Naive thymus-derived CD4-positive, alpha-beta T cell (primary cell): ENCODE measurements at regions of chr12 and their contacts with region 1.

Region 1: GRCh38 chr12:46268590-46269558 is at the start of gene SLC38A1:
- DNase-seq: peak; percentile 73 to 92 (median 88)
- ATAC-seq: peak; percentile 81
- H3K4me3 ChIP-seq: peak within 1 kb of the TSS; percentile 93
- H3K4me3 Mint-ChIP-seq: no peak within 1 kb of the TSS
- H3K27ac ChIP-seq: peak within 1 kb of the TSS; percentile 98
- H3K27ac Mint-ChIP-seq: no peak within 1 kb of the TSS
- H3K4me1 ChIP-seq: peaks cover 35 to 40% of the 10 kb centered on the region in 2 donors
- H3K4me1 Mint-ChIP-seq: peaks cover 9 to 35% (median 31%) of the 10 kb centered on the region in 7 donors
- H3K27me3 ChIP-seq: no peaks in the 10 kb centered on the region
- H3K27me3 Mint-ChIP-seq: no peaks in the 10 kb centered on the region
- total RNA-seq, gene SLC38A1: 172 to 283 (median 249) TPM

Region 2: GRCh38 chr12:46198913-46199312 is 70.0 kb before region 1 on chr12:
- CTCF ChIA-PET with region 1: interaction called, 3 read pairs
- POLR2A ChIA-PET with region 1: interaction called, 78 read pairs
- intact Hi-C with region 1: no loop called
- DNase-seq: no peak
- ATAC-seq: no peak
- H3K4me3 ChIP-seq: no peak overlapping the region
- H3K4me3 Mint-ChIP-seq: peak overlapping the region in 1 of 10 donors; percentile 27
- H3K27ac ChIP-seq: no peak overlapping the region
- H3K27ac Mint-ChIP-seq: peak overlapping the region in 8 of 9 donors; percentile 3 to 90 (median 71)
- H3K4me1 ChIP-seq: no peaks in the 10 kb centered on the region
- H3K4me1 Mint-ChIP-seq: peaks cover 4 to 42% (median 40%) of the 10 kb centered on the region in 7 donors
- H3K27me3 ChIP-seq: no peaks in the 10 kb centered on the region
- H3K27me3 Mint-ChIP-seq: no peaks in the 10 kb centered on the region

Region 3: GRCh38 chr12:46224386-46224785 is 44.5 kb before region 1 on chr12:
- CTCF ChIA-PET with region 1: no interaction called
- POLR2A ChIA-PET with region 1: interaction called, 303 read pairs
- intact Hi-C with region 1: no loop called
- DNase-seq: no peak
- ATAC-seq: no peak
- H3K4me3 ChIP-seq: no peak overlapping the region
- H3K4me3 Mint-ChIP-seq: peak overlapping the region in 5 of 10 donors; percentile 12 to 58 (median 44)
- H3K27ac ChIP-seq: peak overlapping the region; percentile 29
- H3K27ac Mint-ChIP-seq: peak overlapping the region; percentile 15 to 99 (median 88)
- H3K4me1 ChIP-seq: peaks cover 47 to 58% of the 10 kb centered on the region in 2 donors
- H3K4me1 Mint-ChIP-seq: peaks cover 44 to 99% (median 90%) of the 10 kb centered on the region in 7 donors
- H3K27me3 ChIP-seq: no peaks in the 10 kb centered on the region
- H3K27me3 Mint-ChIP-seq: no peaks in the 10 kb centered on the region

Region 4: DNA sequence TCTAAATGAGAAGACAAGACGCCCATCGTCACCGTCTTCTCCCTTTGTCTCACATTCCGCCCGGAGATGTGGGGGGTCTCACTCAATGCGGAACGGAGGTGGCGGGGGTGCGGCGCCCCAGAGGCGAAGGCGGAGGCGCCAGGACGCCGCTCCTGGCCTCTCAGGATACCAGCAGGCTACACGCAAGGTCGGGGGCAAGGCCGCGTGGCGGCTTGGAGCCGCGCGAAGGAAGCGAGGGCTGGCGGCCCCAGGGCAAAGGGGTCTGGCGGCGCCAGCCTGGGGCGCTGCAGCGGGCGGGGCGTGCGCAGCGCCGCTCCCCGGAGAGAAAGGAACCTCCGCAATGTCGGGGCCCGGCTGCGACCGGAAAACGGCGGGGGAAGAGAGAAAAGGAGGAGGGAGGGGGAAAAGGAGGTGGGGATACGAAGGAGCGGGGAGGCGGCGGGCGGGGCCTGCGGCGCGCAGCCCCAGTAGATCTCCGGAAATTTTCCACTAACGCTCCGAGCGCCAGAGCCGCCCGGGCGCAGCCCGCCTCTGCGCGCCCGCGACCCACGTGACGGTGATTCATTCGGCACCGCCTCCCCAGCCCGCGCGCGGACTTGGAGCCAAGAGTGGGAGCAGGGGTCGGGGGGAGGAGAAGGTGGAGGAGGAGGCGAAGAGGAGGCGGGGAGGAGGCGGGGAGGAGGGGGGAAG is 114.2 kb after region 1 on chr12:
- CTCF ChIA-PET with region 1: no interaction called
- POLR2A ChIA-PET with region 1: interaction called, 12 read pairs
- intact Hi-C with region 1: loop called in 1 of 2 experiments (anchors 1 kb)
- DNase-seq: peak; percentile 76 to 96 (median 90)
- ATAC-seq: peak; percentile 89
- H3K4me3 ChIP-seq: peak overlapping the region; percentile 61
- H3K4me3 Mint-ChIP-seq: peak overlapping the region; percentile 82 to 95 (median 91)
- H3K27ac ChIP-seq: peak overlapping the region; percentile 94
- H3K27ac Mint-ChIP-seq: peak overlapping the region; percentile 90 to 98 (median 97)
- H3K4me1 ChIP-seq: peaks cover 5 to 25% of the 10 kb centered on the region in 2 donors
- H3K4me1 Mint-ChIP-seq: peaks cover 24 to 53% (median 47%) of the 10 kb centered on the region in 7 donors
- H3K27me3 ChIP-seq: no peaks in the 10 kb centered on the region
- H3K27me3 Mint-ChIP-seq: no peaks in the 10 kb centered on the region

Region 5: DNA sequence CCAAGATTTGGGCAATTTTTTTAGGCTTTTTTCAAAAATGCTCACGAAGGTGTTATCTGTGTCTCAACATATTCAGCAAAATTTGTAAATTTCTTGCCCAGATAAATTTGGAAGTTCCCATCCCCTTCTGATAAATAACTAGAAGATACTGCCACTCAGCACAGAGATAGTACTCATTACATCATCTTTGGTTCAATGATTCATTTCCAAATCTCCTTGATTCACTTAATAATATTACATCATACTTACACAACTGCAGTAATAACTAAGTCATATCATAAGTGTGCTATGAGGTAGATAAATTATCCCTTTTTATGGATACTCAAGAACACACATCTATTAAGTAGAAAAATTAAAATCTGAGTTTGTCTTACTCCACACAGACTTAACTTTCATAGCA is 1347.6 kb after region 1 on chr12:
- CTCF ChIA-PET with region 1: no interaction called
- POLR2A ChIA-PET with region 1: no interaction called
- intact Hi-C with region 1: no loop called
- DNase-seq: no peak
- ATAC-seq: no peak
- H3K4me3 ChIP-seq: no peak overlapping the region
- H3K4me3 Mint-ChIP-seq: no peak overlapping the region
- H3K27ac ChIP-seq: no peak overlapping the region
- H3K27ac Mint-ChIP-seq: no peak overlapping the region
- H3K4me1 ChIP-seq: no peaks in the 10 kb centered on the region
- H3K4me1 Mint-ChIP-seq: no peaks in the 10 kb centered on the region
- H3K27me3 ChIP-seq: no peaks in the 10 kb centered on the region
- H3K27me3 Mint-ChIP-seq: no peaks in the 10 kb centered on the region

Region 6: GRCh38 chr12:47705566-47706425 is 1436.9 kb after region 1 on chr12 and contains the start of gene RPAP3:
- CTCF ChIA-PET with region 1: no interaction called
- POLR2A ChIA-PET with region 1: interaction called, 6 read pairs
- intact Hi-C with region 1: loop called (anchors 1 to 5 kb)
- DNase-seq: peak; percentile 91 to 99 (median 95)
- ATAC-seq: peak; percentile 97
- H3K4me3 ChIP-seq: peak within 1 kb of the TSS; percentile 59
- H3K4me3 Mint-ChIP-seq: peak within 1 kb of the TSS; percentile 92 to 99 (median 98)
- H3K27ac ChIP-seq: peak within 1 kb of the TSS; percentile 85
- H3K27ac Mint-ChIP-seq: peak within 1 kb of the TSS; percentile 93 to 99 (median 97)
- H3K4me1 ChIP-seq: peaks cover 21 to 27% of the 10 kb centered on the region in 2 donors
- H3K4me1 Mint-ChIP-seq: peaks cover 48 to 73% (median 63%) of the 10 kb centered on the region in 7 donors
- H3K27me3 ChIP-seq: no peaks in the 10 kb centered on the region
- H3K27me3 Mint-ChIP-seq: no peaks in the 10 kb centered on the region
- total RNA-seq, gene RPAP3: 28.5 to 51.3 (median 43.9) TPM